Left cardiac atrium (tissue), 4 donors: ENCODE measurements at regions of chr11 and their contacts with region 1.

Region 1: DNA sequence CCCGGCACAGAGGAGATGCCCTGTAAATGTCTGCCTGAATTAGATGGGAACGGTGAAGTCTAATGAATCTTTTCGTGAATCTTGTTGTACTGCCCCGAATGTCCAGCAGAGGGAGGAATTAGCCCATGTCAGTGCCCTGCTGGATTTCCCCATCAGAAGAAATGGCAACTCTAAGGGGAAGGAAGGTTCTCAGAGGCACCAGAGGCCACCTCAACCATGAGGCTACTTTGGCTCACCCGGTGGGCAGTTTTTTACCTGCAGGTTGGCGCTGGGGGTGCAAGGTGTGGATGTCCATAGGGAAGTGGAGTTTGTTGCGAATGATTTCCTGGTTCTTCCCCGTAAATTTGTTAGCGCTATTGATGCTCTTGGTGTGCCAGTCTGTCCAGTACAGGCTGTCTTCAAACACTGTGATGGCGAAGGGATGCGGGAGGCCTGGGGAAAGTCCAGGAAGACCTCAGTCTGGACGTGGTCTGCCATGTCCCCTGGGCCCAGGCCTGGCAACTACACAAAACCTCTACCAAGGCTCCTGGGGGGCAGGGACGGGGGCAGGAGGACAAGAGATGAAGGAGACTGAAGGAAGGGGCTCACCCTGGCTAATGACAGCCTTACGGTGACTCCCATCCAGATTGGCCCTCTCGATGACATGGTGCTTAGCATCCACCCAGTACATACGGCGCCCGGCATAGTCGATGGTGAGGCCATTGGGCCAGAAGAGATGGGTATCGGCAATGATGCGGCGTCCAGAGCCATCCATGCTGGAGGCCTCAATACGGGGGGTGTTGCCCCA is 28.5 kb downstream of the LRP4 start:
- DNase-seq: peak; percentile 59
- ATAC-seq: peak; percentile 82

Region 2: DNA sequence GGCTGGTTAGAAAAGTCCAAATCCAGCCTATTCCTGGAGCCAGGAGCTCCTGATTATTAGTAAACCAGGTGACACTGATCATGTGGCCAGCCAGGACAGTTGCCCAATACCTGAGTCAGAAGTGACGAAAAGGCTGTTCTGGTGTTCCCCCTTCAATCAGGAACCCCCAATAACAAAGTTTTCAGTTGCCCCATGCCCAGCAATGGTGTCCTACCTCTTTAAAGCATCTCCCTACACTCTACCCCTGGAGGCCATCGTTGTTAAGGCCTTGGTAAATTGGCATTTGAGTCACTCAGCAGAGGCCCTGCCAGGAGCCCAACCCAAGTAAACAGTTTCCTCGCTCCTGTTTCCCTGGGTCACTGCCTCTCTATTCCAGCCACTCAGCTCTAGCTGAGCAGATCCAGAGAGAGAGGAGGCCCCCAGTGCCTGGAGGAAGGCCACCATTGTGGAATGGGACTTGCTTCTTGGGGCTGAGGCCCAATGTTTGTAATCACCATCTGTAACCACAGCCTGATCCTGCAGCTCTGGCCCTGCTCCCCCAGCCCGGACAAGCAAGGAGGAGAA is 214.5 kb before region 1 on chr11:
- intact Hi-C with region 1: no loop called
- DNase-seq: peak; percentile 66
- ATAC-seq: peak; percentile 67 to 80

Region 3: DNA sequence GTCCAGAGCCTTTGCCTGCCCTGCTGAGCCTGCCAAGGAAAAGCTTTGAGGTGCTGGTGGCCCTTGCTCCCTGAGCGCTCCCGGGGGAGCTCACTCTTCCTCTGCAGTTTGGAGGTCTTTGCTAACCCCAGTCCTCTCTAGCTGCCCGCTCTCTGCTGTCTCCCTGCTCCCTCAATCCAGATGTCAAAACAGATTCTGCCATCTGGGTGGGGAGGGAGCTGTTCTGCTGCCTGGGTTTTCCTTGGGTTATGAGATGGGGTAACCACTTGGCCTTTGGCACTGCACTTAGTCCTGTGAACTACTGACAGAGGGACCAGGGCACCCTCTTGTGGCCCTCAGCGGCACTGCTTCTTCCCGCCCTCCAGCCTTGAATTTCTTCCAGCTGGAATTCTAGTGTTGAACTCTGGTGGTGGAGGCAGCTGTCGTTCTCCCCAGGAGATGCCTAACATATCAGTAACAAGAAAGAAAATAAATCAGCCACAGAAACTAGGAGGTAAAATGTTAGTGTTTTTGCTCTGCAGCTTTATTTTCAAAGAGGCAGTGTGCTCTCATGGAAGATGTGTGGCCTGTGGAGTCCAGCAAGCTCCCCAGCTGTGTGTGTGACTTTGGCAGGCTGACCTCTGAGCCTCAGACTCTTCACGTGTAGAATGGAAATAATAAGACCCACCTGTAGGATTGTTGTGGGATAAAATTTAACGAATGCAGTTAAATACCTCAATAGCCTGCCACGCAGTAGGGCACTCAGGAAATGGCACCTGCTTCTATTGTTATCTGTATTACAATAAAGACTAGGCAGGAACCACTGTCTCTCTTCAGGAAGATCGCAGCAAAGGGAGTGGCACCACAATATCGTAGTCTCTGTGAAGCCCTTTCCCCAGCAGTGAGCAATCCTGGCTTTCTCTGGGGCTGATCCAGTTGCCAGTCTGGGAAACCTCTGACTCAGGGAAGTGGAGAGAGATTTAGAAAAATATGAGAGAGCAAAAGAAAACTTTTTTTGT is 263.4 kb after region 1 on chr11:
- intact Hi-C with region 1: loop called (anchors 2 to 5 kb)
- DNase-seq: peak; percentile 78
- ATAC-seq: peak; percentile 76 to 79